ENCODE measurements at regions of chr10 and their contacts with region 1.

Region 1: DNA sequence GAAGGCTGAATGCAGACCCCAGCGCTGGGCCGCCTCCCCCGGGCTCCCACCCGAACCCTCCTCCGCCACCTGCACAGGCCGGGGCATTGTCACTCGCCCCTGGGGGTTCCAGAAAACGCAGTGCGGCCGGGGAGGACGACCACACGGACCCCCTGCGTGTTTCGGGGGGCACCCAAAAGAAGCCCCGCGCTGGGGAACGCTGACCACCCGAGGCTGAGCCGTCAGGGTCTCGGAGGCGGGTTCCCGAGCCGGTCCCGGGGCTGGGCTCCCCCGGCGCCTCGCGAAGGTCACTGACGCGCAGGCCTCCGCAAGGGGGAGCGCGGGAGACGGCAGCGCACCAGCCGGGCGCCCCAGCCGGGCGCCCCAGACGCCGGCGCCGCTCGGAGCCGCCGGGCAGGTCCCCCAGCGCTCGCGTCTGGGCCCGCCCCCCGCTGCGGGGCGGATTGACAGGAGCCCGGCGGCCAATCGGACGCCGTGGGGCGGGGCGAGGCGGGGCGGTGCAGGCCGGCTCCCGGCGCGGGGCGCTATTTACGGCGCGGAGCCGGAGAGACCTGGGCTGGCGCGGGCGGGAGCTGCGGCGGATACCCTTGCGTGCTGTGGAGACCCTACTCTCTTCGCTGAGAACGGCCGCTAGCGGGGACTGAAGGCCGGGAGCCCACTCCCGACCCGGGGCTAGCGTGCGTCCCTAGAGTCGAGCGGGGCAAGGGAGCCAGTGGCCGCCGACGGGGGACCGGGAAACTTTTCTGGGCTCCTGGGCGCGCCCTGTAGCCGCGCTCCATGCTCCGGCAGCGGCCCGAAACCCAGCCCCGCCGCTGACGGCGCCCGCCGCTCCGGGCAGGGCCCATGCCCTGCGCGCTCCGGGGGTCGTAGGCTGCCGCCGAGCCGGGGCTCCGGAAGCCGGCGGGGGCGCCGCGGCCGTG is at the start of gene BAMBI:
- H3K4me3 ChIP-seq: peak within 1 kb of the TSS; percentile 82
- H3K27ac ChIP-seq: peak within 1 kb of the TSS; percentile 92
- H3K4me1 ChIP-seq: peaks cover 3% of the 10 kb centered on the region; the same call in 1 of the 2 replicates
- CTCF ChIP-seq: peak; percentile 60; the same call in 1 of the 2 replicates

Region 2: GRCh38 chr10:28326516-28327490 is 350.4 kb before region 1 on chr10:
- CTCF ChIA-PET with region 1: no interaction called
- POLR2A ChIA-PET with region 1: interaction called, 11 read pairs
- H3K4me3 ChIP-seq: no peak overlapping the region
- H3K27ac ChIP-seq: no peak overlapping the region; the same call in 1 of the 2 replicates
- H3K4me1 ChIP-seq: peaks cover 12% of the 10 kb centered on the region
- CTCF ChIP-seq: no peak

Measured in HEK293 (cell line).